ENCODE measurements at regions of chr7 and their contacts with region 1.

Region 1: DNA sequence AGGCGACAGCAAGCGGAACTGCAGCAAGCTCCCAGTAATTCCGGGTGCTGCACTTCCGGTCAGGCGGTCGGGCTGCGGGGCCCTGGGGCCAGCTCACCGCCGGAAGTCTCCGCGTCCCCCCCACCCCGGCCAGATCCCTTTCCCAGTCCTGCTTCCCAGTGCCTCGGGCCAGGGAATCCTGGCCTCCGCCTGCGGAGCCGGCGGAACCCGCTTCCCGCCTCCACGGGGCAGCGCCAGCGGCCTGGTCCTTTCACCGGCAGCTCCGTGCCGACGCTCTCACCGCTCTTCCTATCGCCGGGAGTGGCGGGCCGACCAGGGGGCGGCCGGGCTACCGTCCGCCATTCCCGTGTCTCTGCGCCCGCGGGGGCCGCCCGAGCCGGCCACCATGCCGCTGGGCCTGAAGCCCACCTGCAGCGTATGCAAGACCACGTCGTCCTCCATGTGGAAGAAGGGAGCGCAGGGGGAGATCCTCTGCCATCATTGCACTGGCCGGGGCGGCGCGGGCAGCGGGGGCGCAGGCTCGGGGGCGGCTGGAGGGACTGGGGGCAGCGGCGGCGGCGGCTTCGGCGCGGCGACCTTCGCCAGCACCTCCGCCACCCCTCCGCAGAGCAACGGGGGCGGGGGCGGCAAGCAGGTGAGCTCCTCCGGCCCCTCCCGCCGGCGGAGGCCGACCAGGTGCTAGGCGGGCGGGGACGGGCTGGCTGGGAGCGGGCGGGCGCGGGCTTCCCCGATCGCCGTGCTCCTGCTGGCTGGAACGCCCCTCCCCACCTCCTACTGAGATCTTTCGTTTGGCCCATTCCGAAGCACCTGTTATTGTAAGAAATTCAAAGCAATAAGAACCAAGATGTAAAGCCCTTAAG is at the start of gene GATAD1:
- DNase-seq: peak; percentile 89
- H3K4me3 Mint-ChIP-seq: peak within 1 kb of the TSS; percentile 82
- H3K27ac Mint-ChIP-seq: peak within 1 kb of the TSS; percentile 84
- H3K4me1 Mint-ChIP-seq: peaks cover 12% of the 10 kb centered on the region
- H3K27me3 Mint-ChIP-seq: no peaks in the 10 kb centered on the region
- total RNA-seq, gene GATAD1: 27.5 to 29.6 TPM

Region 2: DNA sequence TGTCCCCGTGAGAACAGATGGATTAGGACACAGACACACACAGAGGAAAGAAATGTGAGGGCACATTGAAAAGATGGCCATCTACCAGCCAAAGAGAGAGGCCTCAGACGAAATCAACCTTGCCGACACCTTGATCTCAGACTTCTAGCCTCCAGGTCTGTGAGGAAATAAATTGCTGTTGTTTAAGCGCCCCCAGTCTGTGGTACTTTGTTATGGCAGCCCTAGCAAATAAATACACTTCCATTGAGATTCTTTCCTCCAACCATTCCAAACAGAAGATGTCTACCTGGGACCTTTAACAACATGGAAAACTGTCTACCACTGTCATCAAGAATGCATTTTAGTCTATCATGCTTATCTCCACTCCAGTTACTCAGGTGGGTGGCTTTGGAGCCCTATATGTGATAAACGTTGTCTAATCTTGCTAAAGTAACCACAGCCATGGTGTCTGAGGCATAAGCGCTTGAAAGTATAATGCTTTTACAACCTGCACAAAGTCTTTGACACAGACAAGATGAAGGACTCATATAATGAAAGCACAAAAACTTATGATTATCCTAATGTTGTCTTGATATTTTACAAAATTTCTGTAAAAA is 811.3 kb before region 1 on chr7:
- CTCF ChIA-PET with region 1: no interaction called
- intact Hi-C with region 1: loop called (anchors 10 kb)
- DNase-seq: peak; percentile 36
- H3K4me3 Mint-ChIP-seq: no peak overlapping the region
- H3K27ac Mint-ChIP-seq: no peak overlapping the region
- H3K4me1 Mint-ChIP-seq: no peaks in the 10 kb centered on the region
- H3K27me3 Mint-ChIP-seq: no peaks in the 10 kb centered on the region

Region 3: GRCh38 chr7:92075434-92076158 is 372.0 kb before region 1 on chr7:
- CTCF ChIA-PET with region 1: no interaction called
- intact Hi-C with region 1: loop called (anchors 5 kb)
- DNase-seq: no peak
- H3K4me3 Mint-ChIP-seq: no peak overlapping the region
- H3K27ac Mint-ChIP-seq: no peak overlapping the region
- H3K4me1 Mint-ChIP-seq: no peaks in the 10 kb centered on the region
- H3K27me3 Mint-ChIP-seq: no peaks in the 10 kb centered on the region

Region 4: GRCh38 chr7:92245487-92246362 is 201.8 kb before region 1 on chr7 and contains the starts of genes ANKIB1 and KRIT1:
- CTCF ChIA-PET with region 1: interaction called, 9 read pairs
- intact Hi-C with region 1: loop called (anchors 1 kb)
- DNase-seq: peak; percentile 91
- H3K4me3 Mint-ChIP-seq: peak within 1 kb of the TSS; percentile 92
- H3K27ac Mint-ChIP-seq: peak within 1 kb of the TSS; percentile 95
- H3K4me1 Mint-ChIP-seq: peaks cover 33% of the 10 kb centered on the region
- H3K27me3 Mint-ChIP-seq: no peaks in the 10 kb centered on the region
- total RNA-seq, gene ANKIB1: 37.9 to 38.4 TPM
- total RNA-seq, gene KRIT1: 21.5 to 27.9 TPM

Region 5: GRCh38 chr7:92590711-92591310 is 143.2 kb after region 1 on chr7:
- CTCF ChIA-PET with region 1: interaction called, 7 read pairs
- intact Hi-C with region 1: loop called (anchors 2 kb)
- DNase-seq: no peak
- H3K4me3 Mint-ChIP-seq: peak overlapping the region; percentile 86
- H3K27ac Mint-ChIP-seq: no peak overlapping the region
- H3K4me1 Mint-ChIP-seq: peaks cover 39% of the 10 kb centered on the region
- H3K27me3 Mint-ChIP-seq: peaks cover 3% of the 10 kb centered on the region

Measured in activated naive CD4-positive, alpha-beta T cell treated with anti-CD3 and anti-CD28 coated beads for 36 hours (primary cell).